ENCODE measurements at regions of chr1 and their contacts with region 1.

Region 1: GRCh38 chr1:226634166-226634588 is 85.6 kb downstream of the STUM start:
- DNase-seq: peak; percentile 86
- H3K4me3 Mint-ChIP-seq: no peak overlapping the region
- H3K27ac Mint-ChIP-seq: peak overlapping the region; percentile 11
- H3K4me1 Mint-ChIP-seq: peaks cover 57% of the 10 kb centered on the region
- H3K27me3 Mint-ChIP-seq: no peaks in the 10 kb centered on the region

Region 2: DNA sequence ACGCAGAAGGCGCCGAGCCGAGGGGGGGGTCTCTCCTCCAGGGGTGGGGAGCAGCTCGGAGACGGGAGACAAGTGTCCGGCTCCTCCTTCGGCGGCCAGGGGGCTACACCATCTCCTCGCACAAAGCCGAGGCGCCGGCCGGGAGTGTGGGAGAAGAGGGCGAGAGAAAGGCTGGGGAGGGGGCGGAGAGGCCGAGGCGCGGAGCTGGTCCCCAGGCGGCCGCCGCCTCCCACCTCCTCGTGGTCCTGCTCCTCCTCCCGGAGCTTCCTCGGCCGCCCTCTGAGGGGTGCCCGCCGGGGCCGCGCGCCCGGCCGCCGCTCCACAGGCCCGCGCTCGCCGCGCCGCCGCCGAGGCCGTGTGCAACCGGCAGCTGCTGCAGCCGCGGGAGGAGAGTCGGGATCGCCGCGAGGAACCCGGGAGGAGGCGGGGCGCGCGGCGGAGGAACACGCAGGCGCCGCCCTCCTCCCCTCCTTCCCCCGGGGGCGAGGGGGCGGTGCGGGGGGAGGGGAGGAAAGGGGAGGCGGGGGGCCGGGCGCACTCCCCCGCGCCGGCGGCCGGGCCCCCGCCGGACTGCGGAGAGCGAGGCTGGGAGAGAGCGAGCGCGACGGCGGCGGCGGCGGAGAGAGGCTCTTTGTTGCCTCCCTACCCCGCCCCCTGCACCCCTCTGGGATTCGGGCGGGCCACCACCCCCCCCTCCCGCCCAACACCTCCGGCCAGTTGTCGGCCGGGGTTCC is 981.3 kb before region 1 on chr1 and contains the start of gene ENAH:
- CTCF ChIA-PET with region 1: no interaction called
- POLR2A ChIA-PET with region 1: no interaction called
- intact Hi-C with region 1: no loop called
- DNase-seq: peak; percentile 56
- H3K4me3 Mint-ChIP-seq: peak within 1 kb of the TSS; percentile 82
- H3K27ac Mint-ChIP-seq: no peak within 1 kb of the TSS
- H3K4me1 Mint-ChIP-seq: peaks cover 13% of the 10 kb centered on the region
- H3K27me3 Mint-ChIP-seq: peaks cover 24% of the 10 kb centered on the region
- total RNA-seq, gene ENAH: 0.80 to 0.95 TPM

Region 3: GRCh38 chr1:226656601-226657277 is 22.6 kb after region 1 on chr1:
- CTCF ChIA-PET with region 1: interaction called, 33 read pairs
- POLR2A ChIA-PET with region 1: interaction called, 3 read pairs
- intact Hi-C with region 1: no loop called
- DNase-seq: no peak
- H3K4me3 Mint-ChIP-seq: peak overlapping the region; percentile 43
- H3K27ac Mint-ChIP-seq: no peak overlapping the region
- H3K4me1 Mint-ChIP-seq: peaks cover 29% of the 10 kb centered on the region
- H3K27me3 Mint-ChIP-seq: no peaks in the 10 kb centered on the region

Region 4: DNA sequence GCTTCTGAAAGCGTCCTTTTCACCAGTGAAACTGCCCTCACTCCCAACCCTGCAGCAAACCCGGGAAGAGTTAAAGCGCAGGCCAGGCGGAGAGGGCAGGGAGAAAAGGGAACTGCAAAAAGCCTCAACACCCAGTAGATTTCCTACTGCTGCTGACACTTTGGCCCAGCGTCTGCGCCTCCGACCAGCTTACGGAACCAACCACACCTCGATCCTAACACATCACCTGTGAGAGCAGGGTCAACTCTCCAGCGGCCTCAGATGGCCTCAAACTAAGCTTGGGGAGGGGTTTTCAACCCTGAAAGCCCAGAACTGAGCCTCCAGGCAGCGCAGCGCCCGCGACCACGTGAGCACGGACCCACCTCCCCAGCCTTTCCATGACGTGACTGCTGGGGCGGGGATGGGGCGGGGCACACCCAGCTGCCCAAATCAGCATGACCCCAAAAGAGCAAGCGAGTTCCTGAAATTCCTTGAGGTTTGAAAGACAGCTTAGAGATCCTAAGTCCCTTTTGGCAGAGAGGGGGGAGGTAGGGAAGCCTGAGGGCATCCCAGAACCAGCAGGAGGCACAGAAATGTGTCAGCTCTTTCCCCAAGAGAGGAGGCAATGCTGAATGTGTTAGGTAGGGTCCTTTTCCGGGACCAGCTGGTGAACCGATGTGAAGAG is 45.8 kb after region 1 on chr1:
- CTCF ChIA-PET with region 1: interaction called, 15 read pairs
- POLR2A ChIA-PET with region 1: interaction called, 4 read pairs
- intact Hi-C with region 1: loop called (anchors 2 kb)
- DNase-seq: peak; percentile 89
- H3K4me3 Mint-ChIP-seq: peak overlapping the region; percentile 71
- H3K27ac Mint-ChIP-seq: peak overlapping the region; percentile 93
- H3K4me1 Mint-ChIP-seq: peaks cover 98% of the 10 kb centered on the region
- H3K27me3 Mint-ChIP-seq: no peaks in the 10 kb centered on the region

Region 5: GRCh38 chr1:226995365-226996332 is 361.5 kb after region 1 on chr1:
- CTCF ChIA-PET with region 1: no interaction called
- POLR2A ChIA-PET with region 1: no interaction called
- intact Hi-C with region 1: no loop called
- DNase-seq: no peak
- H3K4me3 Mint-ChIP-seq: no peak overlapping the region
- H3K27ac Mint-ChIP-seq: no peak overlapping the region
- H3K4me1 Mint-ChIP-seq: peaks cover 12% of the 10 kb centered on the region
- H3K27me3 Mint-ChIP-seq: no peaks in the 10 kb centered on the region